PC-3 (cell line): ENCODE measurements at regions of chr17 and their contacts with region 1.

Region 1: GRCh38 chr17:50547035-50547735 is at the start of gene SPATA20:
- DNase-seq: peak; percentile 97
- ATAC-seq: peak; percentile 79
- H3K4me3 ChIP-seq: peak within 1 kb of the TSS; percentile 72
- H3K27ac ChIP-seq: peak within 1 kb of the TSS; percentile 43
- H3K4me1 ChIP-seq: peaks cover 28% of the 10 kb centered on the region
- H3K27me3 ChIP-seq: no peaks in the 10 kb centered on the region
- CTCF ChIP-seq: peak; percentile 99
- total RNA-seq, gene SPATA20: 104 and 115 TPM in 2 replicates

Region 2: GRCh38 chr17:50626037-50626574 is 78.9 kb after region 1 on chr17:
- CTCF ChIA-PET with region 1: interaction called, 21 read pairs
- POLR2A ChIA-PET with region 1: no interaction called
- intact Hi-C with region 1: loop called (anchors 1 kb)
- DNase-seq: peak; percentile 76
- ATAC-seq: peak; percentile 61
- H3K4me3 ChIP-seq: no peak overlapping the region
- H3K27ac ChIP-seq: no peak overlapping the region
- H3K4me1 ChIP-seq: peaks cover 23% of the 10 kb centered on the region
- H3K27me3 ChIP-seq: no peaks in the 10 kb centered on the region
- CTCF ChIP-seq: peak; percentile 92

Region 3: GRCh38 chr17:50783193-50783660 is 236.0 kb after region 1 on chr17:
- CTCF ChIA-PET with region 1: no interaction called
- POLR2A ChIA-PET with region 1: no interaction called
- intact Hi-C with region 1: loop called (anchors 1 kb)
- DNase-seq: peak; percentile 97
- ATAC-seq: peak; percentile 99
- H3K4me3 ChIP-seq: peak overlapping the region; percentile 27; the same call in 1 of the 2 replicates
- H3K27ac ChIP-seq: no peak overlapping the region
- H3K4me1 ChIP-seq: no peaks in the 10 kb centered on the region
- H3K27me3 ChIP-seq: no peaks in the 10 kb centered on the region
- CTCF ChIP-seq: peak; percentile 99

Region 4: GRCh38 chr17:50841949-50842354 is 294.8 kb after region 1 on chr17:
- CTCF ChIA-PET with region 1: interaction called, 4 read pairs
- POLR2A ChIA-PET with region 1: no interaction called
- intact Hi-C with region 1: loop called (anchors 1 kb)
- DNase-seq: peak; percentile 88
- ATAC-seq: peak; percentile 92
- H3K4me3 ChIP-seq: no peak overlapping the region
- H3K27ac ChIP-seq: no peak overlapping the region
- H3K4me1 ChIP-seq: peaks cover 15% of the 10 kb centered on the region; the same call in 1 of the 2 replicates
- H3K27me3 ChIP-seq: no peaks in the 10 kb centered on the region
- CTCF ChIP-seq: peak; percentile 92

Region 5: DNA sequence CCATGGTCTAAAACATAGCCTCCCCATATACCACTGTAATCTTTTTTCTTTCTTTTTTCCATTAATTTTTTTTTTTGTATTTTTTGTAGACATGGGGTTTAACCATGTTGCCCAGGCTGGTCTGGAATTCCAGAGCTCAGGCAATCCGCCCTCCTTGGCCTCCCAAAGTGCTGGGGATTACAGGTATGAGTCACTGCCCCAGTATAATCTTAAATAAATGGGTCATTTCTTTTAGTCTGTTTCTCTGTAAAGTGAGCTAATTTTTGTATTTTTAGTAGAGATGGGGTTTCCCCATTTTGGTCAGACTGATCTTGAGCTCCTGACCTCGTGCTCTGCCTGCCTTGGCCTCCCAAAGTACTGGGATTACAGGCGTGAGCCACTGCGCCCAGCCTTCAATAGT is 600.5 kb after region 1 on chr17:
- CTCF ChIA-PET with region 1: no interaction called
- POLR2A ChIA-PET with region 1: no interaction called
- intact Hi-C with region 1: no loop called
- DNase-seq: peak; percentile 28
- ATAC-seq: peak; percentile 57
- H3K4me3 ChIP-seq: no peak overlapping the region
- H3K27ac ChIP-seq: no peak overlapping the region
- H3K4me1 ChIP-seq: peaks cover 17% of the 10 kb centered on the region
- H3K27me3 ChIP-seq: no peaks in the 10 kb centered on the region
- CTCF ChIP-seq: no peak